Naive thymus-derived CD4-positive, alpha-beta T cell (primary cell): ENCODE measurements at regions of chr11 and their contacts with region 1.

Region 1: DNA sequence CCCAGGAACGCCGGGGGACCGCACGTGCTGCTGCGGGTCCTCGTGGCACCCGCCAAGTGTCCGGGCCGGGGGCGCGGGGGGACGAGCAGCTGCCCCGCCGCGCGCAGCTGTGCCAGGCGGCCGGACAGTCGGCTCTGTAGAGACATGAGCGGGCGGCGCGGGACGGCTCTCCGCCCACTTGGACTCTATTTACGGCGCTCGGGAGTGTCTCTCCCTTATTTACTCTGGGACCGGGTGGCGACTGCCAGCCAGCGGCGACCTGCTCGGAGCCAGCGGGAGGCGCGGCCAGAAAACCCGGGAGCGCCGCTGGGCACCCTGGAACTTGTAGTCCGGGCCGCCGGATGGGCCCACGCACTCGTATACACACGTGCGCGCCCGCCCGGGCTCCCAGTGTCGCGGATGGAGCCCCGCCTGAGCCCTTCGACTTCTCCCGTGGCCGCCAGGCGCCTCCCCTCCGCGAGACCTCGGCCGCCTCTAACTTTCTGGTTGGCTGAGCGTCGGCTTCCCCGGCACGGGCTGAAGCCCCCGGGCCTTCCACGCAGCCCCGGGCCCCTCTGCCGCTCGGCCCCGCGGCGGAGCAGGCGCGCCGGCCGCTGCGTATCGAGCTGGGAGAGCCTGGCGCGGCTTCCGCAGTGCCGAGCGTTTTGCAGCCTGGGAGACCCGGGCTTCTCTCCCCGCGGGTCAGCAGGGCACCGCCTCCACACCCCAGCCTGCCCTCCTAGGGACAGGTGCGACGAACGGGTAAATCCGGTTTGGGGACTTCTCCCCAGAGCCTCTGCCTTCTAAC is at the start of gene MACROD1:
- DNase-seq: peak; percentile 52 to 87 (median 65)
- ATAC-seq: peak; percentile 95
- H3K4me3 ChIP-seq: peak within 1 kb of the TSS; percentile 74
- H3K4me3 Mint-ChIP-seq: peak within 1 kb of the TSS; percentile 85 to 94 (median 90)
- H3K27ac ChIP-seq: peak within 1 kb of the TSS; percentile 66
- H3K27ac Mint-ChIP-seq: peak within 1 kb of the TSS; percentile 51 to 83 (median 78)
- H3K4me1 ChIP-seq: peaks cover 0 to 5% of the 10 kb centered on the region in 2 donors
- H3K4me1 Mint-ChIP-seq: peaks cover 7 to 22% (median 16%) of the 10 kb centered on the region in 7 donors
- H3K27me3 ChIP-seq: no peaks in the 10 kb centered on the region
- H3K27me3 Mint-ChIP-seq: no peaks in the 10 kb centered on the region
- total RNA-seq, gene MACROD1: 5.4 to 12.4 (median 8.7) TPM

Region 2: DNA sequence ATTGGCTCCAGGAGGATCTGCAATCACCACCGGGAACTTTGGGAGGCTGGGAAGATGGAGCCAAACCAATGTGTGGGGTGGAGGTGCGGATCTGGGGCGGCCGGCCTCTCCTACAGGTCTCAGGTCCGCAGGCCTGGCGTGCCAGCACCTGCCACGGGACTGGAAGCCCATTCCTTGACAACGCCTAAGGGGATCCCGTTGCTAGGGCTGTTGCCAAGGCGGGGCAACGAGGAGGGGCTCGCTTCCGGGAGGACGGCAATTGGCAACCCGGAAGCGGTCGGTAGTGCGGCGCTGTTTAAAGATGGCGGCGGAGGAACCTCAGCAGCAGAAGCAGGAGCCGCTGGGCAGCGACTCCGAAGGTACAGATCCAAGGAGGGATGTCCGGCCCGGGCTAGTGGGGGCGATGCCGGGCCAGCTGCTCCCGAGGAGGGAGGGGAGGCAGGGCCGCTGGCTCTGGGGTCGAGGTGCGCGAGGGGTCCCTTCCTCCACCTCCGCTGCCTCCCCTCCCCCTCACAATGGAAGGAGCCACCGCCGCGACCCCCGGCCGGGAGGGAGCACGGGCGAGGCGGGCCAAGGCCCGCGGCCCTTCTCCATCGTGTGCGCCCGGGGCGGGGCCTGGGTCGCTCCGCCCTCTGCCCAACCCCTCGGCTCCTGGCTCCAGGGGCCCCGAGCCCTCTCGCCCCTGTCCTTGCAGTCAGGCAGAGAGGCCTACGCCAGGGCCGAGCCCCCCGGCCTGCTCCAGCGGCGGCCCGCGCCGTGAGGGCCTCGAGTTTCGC is 179.7 kb before region 1 on chr11 and contains the start of gene OTUB1:
- CTCF ChIA-PET with region 1: no interaction called
- POLR2A ChIA-PET with region 1: no interaction called
- intact Hi-C with region 1: loop called in 1 of 2 experiments (anchors 5 kb)
- DNase-seq: peak; percentile 64 to 86 (median 83)
- ATAC-seq: peak; percentile 94
- H3K4me3 ChIP-seq: peak within 1 kb of the TSS; percentile 100
- H3K4me3 Mint-ChIP-seq: peak within 1 kb of the TSS; percentile 91 to 99 (median 97)
- H3K27ac ChIP-seq: peak within 1 kb of the TSS; percentile 89
- H3K27ac Mint-ChIP-seq: peak within 1 kb of the TSS; percentile 95 to 99 (median 98)
- H3K4me1 ChIP-seq: peaks cover 14 to 20% of the 10 kb centered on the region in 2 donors
- H3K4me1 Mint-ChIP-seq: peaks cover 11 to 40% (median 35%) of the 10 kb centered on the region in 7 donors
- H3K27me3 ChIP-seq: no peaks in the 10 kb centered on the region
- H3K27me3 Mint-ChIP-seq: no peaks in the 10 kb centered on the region
- total RNA-seq, gene OTUB1: 59.4 to 99.0 (median 72.5) TPM

Region 3: DNA sequence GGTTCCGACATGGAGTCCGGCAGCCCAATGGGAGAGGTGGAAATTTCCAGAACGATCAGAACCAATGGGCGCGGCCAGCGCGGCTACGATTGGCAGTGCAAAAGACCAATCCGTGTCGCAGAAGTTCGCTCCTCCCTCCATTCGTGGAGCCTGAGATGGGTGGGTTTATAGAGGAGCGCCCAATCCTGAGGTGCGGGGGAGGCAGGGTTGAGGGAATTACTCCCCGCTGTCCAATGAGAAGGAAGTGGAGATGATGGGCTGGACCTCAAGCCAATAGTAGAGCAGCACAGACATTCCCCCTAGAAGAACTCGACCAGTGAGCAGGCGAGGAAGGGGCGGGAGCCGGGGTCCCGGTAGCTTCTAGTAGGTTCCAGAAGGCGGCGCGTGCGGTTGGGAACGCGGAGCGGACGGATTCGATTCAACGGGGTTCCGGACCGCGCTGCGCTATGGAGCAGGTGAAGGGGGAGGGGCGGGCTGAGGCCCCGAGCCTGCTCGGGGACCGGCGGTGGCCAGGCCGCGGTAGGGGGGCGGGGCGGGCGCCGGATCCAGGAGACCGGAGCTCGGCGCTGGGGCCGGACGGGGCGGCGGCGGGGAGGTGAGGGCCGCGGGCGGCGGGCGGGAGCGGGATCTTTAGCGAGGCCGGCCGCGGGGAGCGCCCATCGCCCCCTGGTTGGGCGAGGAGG is 19.9 kb after region 1 on chr11 and contains the start of gene STIP1:
- CTCF ChIA-PET with region 1: interaction called, 3 read pairs
- POLR2A ChIA-PET with region 1: interaction called, 18 read pairs
- intact Hi-C with region 1: loop called (anchors 2 kb)
- DNase-seq: peak; percentile 87 to 100 (median 99)
- ATAC-seq: peak; percentile 92
- H3K4me3 ChIP-seq: peak within 1 kb of the TSS; percentile 84
- H3K4me3 Mint-ChIP-seq: peak within 1 kb of the TSS in 9 of 10 donors; percentile 88 to 99 (median 96)
- H3K27ac ChIP-seq: peak within 1 kb of the TSS; percentile 82
- H3K27ac Mint-ChIP-seq: peak within 1 kb of the TSS in 7 of 9 donors; percentile 89 to 99 (median 92)
- H3K4me1 ChIP-seq: peaks cover 11 to 28% of the 10 kb centered on the region in 2 donors
- H3K4me1 Mint-ChIP-seq: peaks cover 19 to 58% (median 46%) of the 10 kb centered on the region in 7 donors
- H3K27me3 ChIP-seq: no peaks in the 10 kb centered on the region
- H3K27me3 Mint-ChIP-seq: peaks cover 0 to 6% (median 0%) of the 10 kb centered on the region in 5 donors
- total RNA-seq, gene STIP1: 45.1 to 243 (median 88.8) TPM

Region 4: GRCh38 chr11:65477149-65477965 is 1311.3 kb after region 1 on chr11:
- CTCF ChIA-PET with region 1: no interaction called
- POLR2A ChIA-PET with region 1: no interaction called
- intact Hi-C with region 1: no loop called
- DNase-seq: peak; percentile 69 to 96 (median 75)
- ATAC-seq: peak; percentile 94
- H3K4me3 ChIP-seq: peak overlapping the region; percentile 97
- H3K4me3 Mint-ChIP-seq: peak overlapping the region; percentile 87 to 100 (median 96)
- H3K27ac ChIP-seq: peak overlapping the region; percentile 96
- H3K27ac Mint-ChIP-seq: peak overlapping the region; percentile 94 to 100 (median 99)
- H3K4me1 ChIP-seq: peaks cover 6 to 17% of the 10 kb centered on the region in 2 donors
- H3K4me1 Mint-ChIP-seq: peaks cover 8 to 30% (median 14%) of the 10 kb centered on the region in 7 donors
- H3K27me3 ChIP-seq: no peaks in the 10 kb centered on the region
- H3K27me3 Mint-ChIP-seq: peaks cover 0 to 2% (median 0%) of the 10 kb centered on the region in 5 donors